Natural killer cell (primary cell): ENCODE measurements at regions of chr2 and their contacts with region 1.

Region 1: DNA sequence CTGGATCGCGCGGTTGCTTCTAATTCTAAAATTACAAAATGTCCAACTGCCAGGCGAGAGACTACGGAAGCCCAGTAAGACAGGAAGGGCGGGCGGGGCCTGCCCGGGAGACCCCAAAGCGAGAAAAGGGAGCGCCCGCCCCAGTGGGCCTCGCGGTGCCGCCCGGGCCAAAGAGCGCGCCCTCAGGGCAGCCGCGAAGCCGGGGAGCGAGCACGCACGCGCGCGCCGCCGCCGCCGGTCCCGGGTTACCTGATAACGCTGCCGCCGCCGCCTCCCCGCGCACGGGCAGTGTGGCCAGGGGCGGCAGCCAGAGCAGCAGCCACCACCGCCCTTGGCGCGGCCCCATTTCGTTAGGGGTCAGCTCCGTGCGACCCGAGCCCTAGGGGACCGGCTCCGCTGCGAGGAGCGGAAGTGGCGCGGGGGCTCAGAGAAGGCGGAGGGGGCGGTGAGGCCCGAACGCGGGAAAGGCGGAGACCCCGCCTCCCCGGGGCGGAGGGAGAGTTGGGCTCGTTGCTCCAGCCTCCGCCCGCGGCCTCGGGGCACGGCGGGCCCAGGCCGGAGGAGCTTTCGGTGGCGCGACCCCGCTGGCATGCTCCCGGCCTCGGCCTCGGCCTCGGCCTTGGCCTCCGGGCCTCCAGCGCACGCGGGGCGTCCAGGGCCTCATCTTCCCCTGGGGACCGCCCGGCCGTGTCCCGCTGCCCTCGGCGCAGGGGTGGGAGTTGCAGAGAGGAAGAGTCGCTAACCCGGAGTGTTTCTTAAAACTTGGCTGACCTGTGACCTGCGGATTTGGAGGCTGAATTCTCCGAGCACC is at the start of gene NEMP2:
- DNase-seq: peak; percentile 84 to 85
- ATAC-seq: peak; percentile 78 to 92 (median 83)
- H3K4me3 ChIP-seq: peak within 1 kb of the TSS; percentile 74
- H3K4me3 Mint-ChIP-seq: peak within 1 kb of the TSS; percentile 97
- H3K27ac ChIP-seq: peak within 1 kb of the TSS; percentile 93
- H3K27ac Mint-ChIP-seq: peak within 1 kb of the TSS; percentile 98 to 99
- H3K4me1 ChIP-seq: peaks cover 18% of the 10 kb centered on the region
- H3K4me1 Mint-ChIP-seq: peaks cover 44 to 45% of the 10 kb centered on the region in 2 donors
- H3K27me3 ChIP-seq: no peaks in the 10 kb centered on the region
- H3K27me3 Mint-ChIP-seq: no peaks in the 10 kb centered on the region
- CTCF ChIP-seq: no peak
- total RNA-seq, gene NEMP2: 17.2 to 21.0 (median 18.3) TPM

Region 2: DNA sequence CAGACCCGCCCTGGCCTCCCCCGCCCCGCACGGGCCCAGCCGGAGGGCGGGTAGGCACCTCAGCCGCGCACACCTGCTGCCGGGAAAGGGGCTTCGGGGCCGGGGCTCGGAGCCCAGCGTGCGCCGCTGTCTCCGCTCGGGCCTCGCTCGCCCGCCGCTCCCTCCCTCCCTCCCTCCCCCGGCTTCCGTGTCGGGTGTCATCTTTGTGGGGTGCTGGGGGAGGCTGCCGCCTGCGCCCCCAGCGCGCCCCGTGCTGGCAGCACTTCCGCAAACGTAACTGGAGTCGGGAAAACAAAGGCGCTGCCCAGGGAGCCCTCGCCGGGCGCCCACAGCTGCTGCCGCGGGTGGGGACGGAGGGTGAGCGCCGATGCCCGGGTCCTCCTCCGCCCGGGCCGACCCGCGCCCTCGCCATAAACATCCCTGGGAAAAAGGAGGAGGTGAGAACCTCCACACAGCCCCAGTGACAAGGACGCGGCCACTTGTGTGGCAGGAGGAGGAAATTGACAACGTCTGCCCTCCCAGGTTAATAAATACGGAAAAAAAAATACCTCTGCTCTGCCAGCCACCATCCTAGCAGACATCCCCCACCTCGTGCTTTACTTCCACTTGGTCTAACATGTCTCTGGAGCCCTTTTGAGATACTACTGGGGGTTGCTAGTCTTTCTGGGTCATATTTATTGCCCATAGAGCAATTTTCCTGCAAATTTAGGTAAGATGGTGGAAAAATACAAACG is 125.8 kb before region 1 on chr2:
- intact Hi-C with region 1: loop called (anchors 2 kb)
- DNase-seq: peak; percentile 59 to 91
- ATAC-seq: peak; percentile 69 to 85 (median 79)
- H3K4me3 ChIP-seq: peak overlapping the region; percentile 92
- H3K4me3 Mint-ChIP-seq: peak overlapping the region; percentile 90
- H3K27ac ChIP-seq: peak overlapping the region; percentile 97
- H3K27ac Mint-ChIP-seq: peak overlapping the region in 1 of 2 donors; percentile 83
- H3K4me1 ChIP-seq: peaks cover 19% of the 10 kb centered on the region
- H3K4me1 Mint-ChIP-seq: peaks cover 25 to 31% of the 10 kb centered on the region in 2 donors
- H3K27me3 ChIP-seq: no peaks in the 10 kb centered on the region
- H3K27me3 Mint-ChIP-seq: no peaks in the 10 kb centered on the region
- CTCF ChIP-seq: no peak

Region 3: DNA sequence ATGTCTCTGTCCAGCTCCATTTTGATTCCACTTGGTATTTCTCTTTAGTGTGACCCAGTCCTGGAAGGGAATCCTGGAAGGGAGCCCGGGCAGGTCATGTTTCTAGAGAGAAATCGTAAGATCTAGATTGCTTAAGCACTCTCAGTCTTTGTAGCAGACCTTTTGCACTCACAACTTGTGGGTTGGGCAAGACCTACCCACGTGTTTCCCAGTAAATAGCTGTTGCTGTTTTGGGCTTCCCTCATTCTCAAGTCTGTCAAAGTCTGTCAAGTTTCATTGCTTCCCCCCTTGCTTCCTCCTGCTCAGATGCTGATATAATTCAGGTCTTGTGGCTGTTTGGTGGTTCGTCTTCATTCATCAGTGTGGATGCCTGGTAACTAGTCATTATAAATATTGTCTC is 17.4 kb after region 1 on chr2:
- intact Hi-C with region 1: loop called (anchors 1 kb)
- DNase-seq: peak in 1 of 2 donors; percentile 60
- ATAC-seq: peak; percentile 94 to 97 (median 97)
- H3K4me3 ChIP-seq: no peak overlapping the region
- H3K4me3 Mint-ChIP-seq: peak overlapping the region; percentile 60
- H3K27ac ChIP-seq: no peak overlapping the region
- H3K27ac Mint-ChIP-seq: peak overlapping the region; percentile 83 to 92
- H3K4me1 ChIP-seq: peaks cover 10% of the 10 kb centered on the region
- H3K4me1 Mint-ChIP-seq: peaks cover 14 to 15% of the 10 kb centered on the region in 2 donors
- H3K27me3 ChIP-seq: no peaks in the 10 kb centered on the region
- H3K27me3 Mint-ChIP-seq: no peaks in the 10 kb centered on the region
- CTCF ChIP-seq: no peak

Region 4: GRCh38 chr2:190648289-190649034 is 113.9 kb after region 1 on chr2:
- intact Hi-C with region 1: loop called (anchors 2 kb)
- DNase-seq: peak; percentile 90 to 97
- ATAC-seq: peak; percentile 77 to 93 (median 83)
- H3K4me3 ChIP-seq: peak overlapping the region; percentile 91
- H3K4me3 Mint-ChIP-seq: peak overlapping the region; percentile 95
- H3K27ac ChIP-seq: peak overlapping the region; percentile 82
- H3K27ac Mint-ChIP-seq: peak overlapping the region; percentile 86 to 90
- H3K4me1 ChIP-seq: peaks cover 14% of the 10 kb centered on the region
- H3K4me1 Mint-ChIP-seq: peaks cover 19 to 27% of the 10 kb centered on the region in 2 donors
- H3K27me3 ChIP-seq: no peaks in the 10 kb centered on the region
- H3K27me3 Mint-ChIP-seq: no peaks in the 10 kb centered on the region
- CTCF ChIP-seq: no peak

Region 5: DNA sequence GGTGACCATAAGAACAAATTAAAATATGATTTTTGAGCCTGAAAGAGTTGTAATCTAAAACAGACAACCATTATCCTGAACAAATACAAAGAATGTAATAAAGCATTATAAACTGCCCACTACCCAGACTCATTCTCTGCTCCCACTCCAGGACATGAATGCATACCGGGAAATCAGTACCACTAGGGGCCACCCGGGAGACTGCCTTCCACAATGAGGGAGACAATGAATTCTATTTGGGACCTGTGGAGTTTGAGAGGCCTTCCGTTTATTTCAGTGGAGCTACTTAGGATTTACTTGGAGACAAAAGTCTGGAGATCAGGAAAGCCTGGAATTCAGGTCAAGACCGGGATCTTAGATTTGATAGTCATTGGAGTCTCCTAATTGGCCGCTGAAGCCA is 164.4 kb after region 1 on chr2:
- intact Hi-C with region 1: loop called (anchors 5 kb)
- DNase-seq: no peak
- ATAC-seq: no peak
- H3K4me3 ChIP-seq: no peak overlapping the region
- H3K4me3 Mint-ChIP-seq: no peak overlapping the region
- H3K27ac ChIP-seq: no peak overlapping the region
- H3K27ac Mint-ChIP-seq: no peak overlapping the region
- H3K4me1 ChIP-seq: no peaks in the 10 kb centered on the region
- H3K4me1 Mint-ChIP-seq: peaks cover 11 to 15% of the 10 kb centered on the region in 2 donors
- H3K27me3 ChIP-seq: no peaks in the 10 kb centered on the region
- H3K27me3 Mint-ChIP-seq: peaks cover 5 to 7% of the 10 kb centered on the region in 2 donors
- CTCF ChIP-seq: no peak